CD4-positive, alpha-beta T cell (primary cell): ENCODE measurements at regions of chr15 and their contacts with region 1.

Region 1: GRCh38 chr15:86929461-86929860 is 849.8 kb downstream of the AGBL1 start:
- DNase-seq: no peak
- ATAC-seq: no peak
- H3K4me3 ChIP-seq: no peak overlapping the region
- H3K4me3 Mint-ChIP-seq: no peak overlapping the region
- H3K27ac ChIP-seq: no peak overlapping the region
- H3K27ac Mint-ChIP-seq: no peak overlapping the region
- H3K4me1 ChIP-seq: no peaks in the 10 kb centered on the region
- H3K4me1 Mint-ChIP-seq: no peaks in the 10 kb centered on the region
- H3K27me3 ChIP-seq: no peaks in the 10 kb centered on the region
- H3K27me3 Mint-ChIP-seq: peaks cover 16% of the 10 kb centered on the region
- CTCF ChIP-seq: no peak

Region 2: GRCh38 chr15:86988033-86988432 is 58.6 kb after region 1 on chr15:
- CTCF ChIA-PET with region 1: no interaction called
- POLR2A ChIA-PET with region 1: no interaction called
- intact Hi-C with region 1: loop called in 1 of 2 experiments (anchors 10 kb)
- DNase-seq: no peak
- ATAC-seq: no peak
- H3K4me3 ChIP-seq: no peak overlapping the region
- H3K4me3 Mint-ChIP-seq: no peak overlapping the region
- H3K27ac ChIP-seq: no peak overlapping the region
- H3K27ac Mint-ChIP-seq: no peak overlapping the region
- H3K4me1 ChIP-seq: no peaks in the 10 kb centered on the region
- H3K4me1 Mint-ChIP-seq: no peaks in the 10 kb centered on the region
- H3K27me3 ChIP-seq: no peaks in the 10 kb centered on the region
- H3K27me3 Mint-ChIP-seq: no peaks in the 10 kb centered on the region
- CTCF ChIP-seq: no peak